ENCODE measurements at regions of chr22 and their contacts with region 1.

Region 1: DNA sequence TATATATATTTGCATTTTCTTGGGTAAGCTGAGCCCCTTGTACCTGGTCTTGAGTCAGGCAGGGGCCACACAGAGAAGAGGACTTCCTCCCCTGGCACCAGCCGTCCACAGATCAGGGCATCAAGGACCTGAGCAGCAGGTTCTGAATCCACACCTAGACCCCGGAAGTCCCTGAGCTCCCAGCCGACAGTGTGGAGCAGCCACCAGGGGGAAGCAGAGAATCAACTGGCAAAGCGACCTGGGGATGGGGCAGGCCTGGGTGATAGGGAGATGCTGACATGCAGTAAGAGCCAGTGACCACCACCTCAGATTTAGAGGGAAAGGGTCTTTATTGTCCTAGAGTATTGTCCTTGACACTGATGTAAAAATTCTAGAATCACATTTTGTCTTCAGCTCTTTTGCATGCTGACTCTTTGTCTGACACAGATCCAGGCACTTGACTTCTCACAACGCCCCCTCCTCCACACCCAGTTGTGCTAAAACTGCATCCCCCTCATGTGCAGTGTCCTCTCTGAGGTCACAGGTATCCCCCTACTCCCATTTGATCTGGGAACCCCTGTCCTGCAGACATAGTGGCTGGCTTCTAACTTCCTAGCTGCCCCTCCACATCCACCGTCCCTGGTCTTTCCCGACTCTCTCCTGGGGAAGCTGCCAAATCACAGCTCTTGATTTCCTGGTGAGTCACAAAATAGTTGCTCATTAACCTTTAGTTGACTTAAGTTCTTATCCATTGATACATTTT is 109.3 kb downstream of the GGTLC2 start:
- DNase-seq: peak; percentile 69 to 88 (median 75)
- H3K4me3 ChIP-seq: no peak overlapping the region
- H3K4me3 Mint-ChIP-seq: peak overlapping the region; percentile 38 to 87 (median 71)
- H3K27ac ChIP-seq: no peak overlapping the region
- H3K27ac Mint-ChIP-seq: peak overlapping the region; percentile 67 to 98 (median 92)
- H3K4me1 ChIP-seq: peaks cover 50% of the 10 kb centered on the region
- H3K4me1 Mint-ChIP-seq: peaks cover 74 to 82% (median 80%) of the 10 kb centered on the region in 3 donors
- H3K27me3 ChIP-seq: no peaks in the 10 kb centered on the region
- H3K27me3 Mint-ChIP-seq: no peaks in the 10 kb centered on the region

Region 2: DNA sequence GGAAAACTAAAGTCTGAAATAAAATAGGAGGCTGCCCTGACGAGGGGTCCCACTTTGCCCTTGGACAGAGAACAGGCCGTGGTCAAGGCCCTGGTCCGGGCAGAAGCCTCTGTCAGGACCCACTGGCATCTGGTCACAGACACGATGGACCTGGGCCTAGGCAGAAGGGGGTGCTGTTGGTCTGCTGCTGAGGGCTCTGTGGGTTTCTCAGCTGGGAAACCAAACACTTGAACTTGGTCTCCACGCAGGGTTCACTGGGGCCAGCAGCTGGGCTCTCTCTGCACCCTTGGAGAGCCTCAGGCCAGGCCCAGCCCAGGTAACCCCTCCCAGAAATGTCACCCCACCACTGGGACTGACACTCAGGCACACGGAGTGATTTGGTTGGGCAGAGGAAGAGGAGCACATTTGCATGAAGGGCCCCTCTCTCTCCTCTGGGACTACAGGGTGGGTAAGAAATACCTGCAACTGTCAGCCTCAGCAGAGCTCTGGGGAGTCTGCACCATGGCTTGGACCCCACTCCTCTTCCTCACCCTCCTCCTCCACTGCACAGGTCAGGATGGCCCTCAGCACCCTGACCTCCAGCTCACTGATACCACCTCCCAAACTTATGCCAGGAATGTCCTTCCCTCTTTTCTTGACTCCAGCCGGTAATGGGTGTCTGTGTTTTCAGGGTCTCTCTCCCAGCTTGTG is 723.1 kb before region 1 on chr22:
- CTCF ChIA-PET with region 1: no interaction called
- POLR2A ChIA-PET with region 1: no interaction called
- DNase-seq: no peak
- H3K4me3 ChIP-seq: no peak overlapping the region
- H3K4me3 Mint-ChIP-seq: no peak overlapping the region
- H3K27ac ChIP-seq: no peak overlapping the region
- H3K27ac Mint-ChIP-seq: no peak overlapping the region
- H3K4me1 ChIP-seq: no peaks in the 10 kb centered on the region
- H3K4me1 Mint-ChIP-seq: no peaks in the 10 kb centered on the region
- H3K27me3 ChIP-seq: no peaks in the 10 kb centered on the region
- H3K27me3 Mint-ChIP-seq: peaks cover 0 to 13% of the 10 kb centered on the region in 2 donors

Region 3: DNA sequence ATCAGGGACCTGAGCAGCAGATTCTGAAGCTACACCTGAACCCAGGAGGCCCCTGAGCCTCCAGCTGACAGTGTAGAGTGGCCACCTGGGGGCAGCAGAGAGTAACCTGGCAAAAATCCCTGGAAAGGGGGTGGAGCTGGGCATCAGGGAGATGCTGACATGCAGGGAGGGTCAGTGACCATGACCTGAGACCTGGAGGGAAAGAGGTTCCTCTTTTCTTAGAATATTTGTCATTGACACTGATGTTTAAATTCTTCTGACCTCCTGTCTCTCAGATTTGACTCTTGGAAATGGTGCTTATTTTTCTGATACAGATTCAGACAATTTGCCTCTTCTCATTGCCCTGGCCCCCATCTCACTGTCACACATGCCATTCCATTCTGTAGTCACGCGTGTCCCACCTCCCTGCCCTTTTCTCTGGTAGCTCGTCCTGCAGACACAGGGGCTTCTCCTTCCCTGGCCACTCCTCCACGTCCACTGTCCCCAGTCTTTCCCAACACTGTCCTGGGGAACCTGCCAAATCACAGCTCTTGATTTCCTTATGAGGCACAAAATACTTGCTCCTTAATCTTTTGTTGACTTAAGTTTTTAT is 16.7 kb after region 1 on chr22:
- CTCF ChIA-PET with region 1: interaction called, 107 read pairs
- POLR2A ChIA-PET with region 1: interaction called, 5 read pairs
- DNase-seq: peak; percentile 25 to 62 (median 31)
- H3K4me3 ChIP-seq: no peak overlapping the region
- H3K4me3 Mint-ChIP-seq: peak overlapping the region in 2 of 7 donors; percentile 0 to 15
- H3K27ac ChIP-seq: no peak overlapping the region
- H3K27ac Mint-ChIP-seq: peak overlapping the region; percentile 76 to 91 (median 84)
- H3K4me1 ChIP-seq: peaks cover 4% of the 10 kb centered on the region
- H3K4me1 Mint-ChIP-seq: peaks cover 72 to 97% (median 84%) of the 10 kb centered on the region in 3 donors
- H3K27me3 ChIP-seq: no peaks in the 10 kb centered on the region
- H3K27me3 Mint-ChIP-seq: no peaks in the 10 kb centered on the region

Region 4: GRCh38 chr22:22802339-22802970 is 48.8 kb after region 1 on chr22:
- CTCF ChIA-PET with region 1: interaction called, 194 read pairs
- POLR2A ChIA-PET with region 1: interaction called, 3 read pairs
- DNase-seq: peak in 1 of 5 donors; percentile 52
- H3K4me3 ChIP-seq: no peak overlapping the region
- H3K4me3 Mint-ChIP-seq: peak overlapping the region in 2 of 7 donors; percentile 9 to 29
- H3K27ac ChIP-seq: no peak overlapping the region
- H3K27ac Mint-ChIP-seq: peak overlapping the region; percentile 37 to 81 (median 53)
- H3K4me1 ChIP-seq: peaks cover 6% of the 10 kb centered on the region
- H3K4me1 Mint-ChIP-seq: peaks cover 73 to 90% (median 88%) of the 10 kb centered on the region in 3 donors
- H3K27me3 ChIP-seq: no peaks in the 10 kb centered on the region
- H3K27me3 Mint-ChIP-seq: no peaks in the 10 kb centered on the region

Region 5: DNA sequence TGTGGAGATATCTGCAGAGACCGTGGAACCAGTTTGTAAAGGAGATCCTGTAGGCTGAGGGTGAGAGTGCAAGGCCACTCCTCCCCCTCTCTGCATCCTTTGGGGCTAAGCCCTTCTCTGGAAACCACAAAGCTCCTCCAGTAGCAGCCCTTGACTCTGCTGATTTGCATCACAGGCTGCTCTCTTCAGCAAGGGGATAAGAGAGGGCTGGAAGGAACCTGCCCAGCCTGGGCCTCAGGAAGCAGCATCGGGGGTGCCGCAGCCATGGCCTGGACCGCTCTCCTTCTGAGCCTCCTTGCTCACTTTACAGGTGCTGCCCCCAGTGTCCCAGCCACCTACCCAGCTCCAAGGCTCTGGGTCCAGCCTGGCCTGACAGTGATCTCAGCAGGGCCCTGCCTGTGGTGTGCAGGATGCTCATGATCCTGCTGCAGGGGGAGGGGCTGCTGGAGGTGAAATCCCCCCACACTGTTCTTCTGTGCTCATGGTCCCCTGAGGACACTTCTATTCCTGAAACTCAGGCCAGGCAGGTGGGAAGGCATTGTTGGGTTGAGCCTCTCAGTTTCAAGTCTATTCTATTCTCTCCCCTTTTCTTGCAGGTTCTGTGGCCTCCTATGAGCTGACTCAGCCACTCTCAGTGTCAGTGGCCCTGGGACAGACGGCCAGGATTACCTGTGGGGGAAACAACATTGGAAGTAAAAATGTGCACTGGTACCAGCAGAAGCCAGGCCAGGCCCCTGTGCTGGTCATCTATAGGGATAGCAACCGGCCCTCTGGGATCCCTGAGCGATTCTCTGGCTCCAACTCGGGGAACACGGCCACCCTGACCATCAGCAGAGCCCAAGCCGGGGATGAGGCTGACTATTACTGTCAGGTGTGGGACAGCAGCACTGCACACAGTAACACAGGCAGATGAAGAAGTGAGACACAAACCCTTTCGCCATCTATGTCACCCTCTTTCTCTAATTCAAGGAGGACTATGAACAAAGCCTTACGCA is 65.5 kb after region 1 on chr22:
- CTCF ChIA-PET with region 1: interaction called, 194 read pairs
- POLR2A ChIA-PET with region 1: interaction called, 10 read pairs
- DNase-seq: peak in 3 of 5 donors; percentile 38 to 74 (median 62)
- H3K4me3 ChIP-seq: peak overlapping the region; percentile 28
- H3K4me3 Mint-ChIP-seq: peak overlapping the region; percentile 75 to 92 (median 86)
- H3K27ac ChIP-seq: peak overlapping the region; percentile 3
- H3K27ac Mint-ChIP-seq: peak overlapping the region; percentile 75 to 97 (median 88)
- H3K4me1 ChIP-seq: peaks cover 90% of the 10 kb centered on the region
- H3K4me1 Mint-ChIP-seq: peaks cover 97 to 99% (median 99%) of the 10 kb centered on the region in 3 donors
- H3K27me3 ChIP-seq: no peaks in the 10 kb centered on the region
- H3K27me3 Mint-ChIP-seq: no peaks in the 10 kb centered on the region

Region 6: GRCh38 chr22:22855617-22856308 is 102.1 kb after region 1 on chr22:
- CTCF ChIA-PET with region 1: interaction called, 35 read pairs
- POLR2A ChIA-PET with region 1: no interaction called
- DNase-seq: peak; percentile 5 to 65 (median 21)
- H3K4me3 ChIP-seq: no peak overlapping the region
- H3K4me3 Mint-ChIP-seq: no peak overlapping the region
- H3K27ac ChIP-seq: no peak overlapping the region
- H3K27ac Mint-ChIP-seq: peak overlapping the region in 4 of 8 donors; percentile 42 to 74 (median 64)
- H3K4me1 ChIP-seq: no peaks in the 10 kb centered on the region
- H3K4me1 Mint-ChIP-seq: peaks cover 14 to 31% (median 17%) of the 10 kb centered on the region in 3 donors
- H3K27me3 ChIP-seq: no peaks in the 10 kb centered on the region
- H3K27me3 Mint-ChIP-seq: peaks cover 0 to 2% of the 10 kb centered on the region in 2 donors

Region 7: GRCh38 chr22:22877523-22878210 is 124.0 kb after region 1 on chr22:
- CTCF ChIA-PET with region 1: interaction called, 117 read pairs
- POLR2A ChIA-PET with region 1: interaction called, 5 read pairs
- DNase-seq: peak; percentile 63 to 84 (median 75)
- H3K4me3 ChIP-seq: no peak overlapping the region
- H3K4me3 Mint-ChIP-seq: no peak overlapping the region
- H3K27ac ChIP-seq: no peak overlapping the region
- H3K27ac Mint-ChIP-seq: peak overlapping the region in 4 of 8 donors; percentile 43 to 69 (median 58)
- H3K4me1 ChIP-seq: no peaks in the 10 kb centered on the region
- H3K4me1 Mint-ChIP-seq: peaks cover 14 to 18% (median 17%) of the 10 kb centered on the region in 3 donors
- H3K27me3 ChIP-seq: no peaks in the 10 kb centered on the region
- H3K27me3 Mint-ChIP-seq: peaks cover 0 to 4% of the 10 kb centered on the region in 2 donors